IMR-90 (cell line): ENCODE measurements at regions of chr15 and their contacts with region 1.

Region 1: GRCh38 chr15:79380755-79381497 is 51.2 kb upstream of the MINAR1 start:
- DNase-seq: peak; percentile 74
- ATAC-seq: peak; percentile 98
- H3K4me3 ChIP-seq: no peak overlapping the region
- H3K27ac ChIP-seq: no peak overlapping the region
- H3K4me1 ChIP-seq: no peaks in the 10 kb centered on the region
- H3K27me3 ChIP-seq: no peaks in the 10 kb centered on the region
- CTCF ChIP-seq: peak; percentile 90
- POLR2A ChIP-seq: no peak; the same call in 1 of the 2 replicates
- RAD21 ChIP-seq: peak; percentile 92

Region 2: GRCh38 chr15:79015416-79015815 is 365.5 kb before region 1 on chr15:
- CTCF ChIA-PET with region 1: no interaction called
- POLR2A ChIA-PET with region 1: no interaction called
- dilution Hi-C with region 1: no loop called
- in situ Hi-C with region 1: no loop called
- intact Hi-C with region 1: no loop called
- DNase-seq: no peak
- ATAC-seq: no peak
- H3K4me3 ChIP-seq: no peak overlapping the region
- H3K27ac ChIP-seq: no peak overlapping the region
- H3K4me1 ChIP-seq: no peaks in the 10 kb centered on the region
- H3K27me3 ChIP-seq: peaks cover 30% of the 10 kb centered on the region
- CTCF ChIP-seq: no peak
- POLR2A ChIP-seq: no peak
- RAD21 ChIP-seq: no peak

Region 3: GRCh38 chr15:79091204-79091867 is 289.6 kb before region 1 on chr15:
- CTCF ChIA-PET with region 1: no interaction called
- POLR2A ChIA-PET with region 1: no interaction called
- dilution Hi-C with region 1: no loop called
- in situ Hi-C with region 1: no loop called
- intact Hi-C with region 1: no loop called
- DNase-seq: peak; percentile 6
- ATAC-seq: peak; percentile 40
- H3K4me3 ChIP-seq: no peak overlapping the region
- H3K27ac ChIP-seq: no peak overlapping the region
- H3K4me1 ChIP-seq: no peaks in the 10 kb centered on the region
- H3K27me3 ChIP-seq: peaks cover 35% of the 10 kb centered on the region
- CTCF ChIP-seq: no peak
- POLR2A ChIP-seq: no peak
- RAD21 ChIP-seq: no peak

Region 4: DNA sequence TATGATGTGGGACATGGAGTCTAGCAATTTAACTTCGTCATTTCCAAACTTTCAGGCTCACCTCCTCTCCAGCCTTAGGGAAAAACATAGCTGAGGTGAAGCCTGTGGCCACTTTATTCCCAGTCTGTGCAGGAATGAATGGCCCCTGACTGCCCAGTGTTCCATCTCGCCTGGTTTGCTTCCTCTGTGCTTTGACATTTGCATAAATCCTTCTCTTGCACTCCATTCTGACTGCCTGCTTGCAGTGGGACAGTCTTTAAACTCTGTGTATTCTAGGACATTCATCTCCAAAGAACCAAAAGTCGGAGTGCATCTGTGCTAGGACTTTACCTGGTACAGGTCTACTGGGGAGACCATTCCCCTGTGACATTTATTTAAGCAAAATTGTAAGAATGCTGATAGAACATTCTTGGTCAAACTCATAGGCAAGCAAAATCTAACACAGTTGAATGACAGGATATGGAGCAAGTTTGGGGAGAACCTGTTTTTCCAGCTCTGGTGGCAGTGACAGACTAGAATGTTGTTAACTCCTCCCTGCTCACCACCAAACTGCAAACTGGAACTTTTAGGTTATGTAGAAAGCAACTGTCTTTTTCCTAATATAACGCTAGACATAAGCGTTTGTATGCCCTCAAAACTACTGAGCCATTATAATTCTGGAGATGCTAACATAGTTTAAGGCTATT is 48.0 kb before region 1 on chr15:
- CTCF ChIA-PET with region 1: no interaction called
- POLR2A ChIA-PET with region 1: no interaction called
- dilution Hi-C with region 1: no loop called
- in situ Hi-C with region 1: no loop called
- intact Hi-C with region 1: no loop called
- DNase-seq: no peak
- ATAC-seq: no peak
- H3K4me3 ChIP-seq: no peak overlapping the region
- H3K27ac ChIP-seq: no peak overlapping the region
- H3K4me1 ChIP-seq: peaks cover 3% of the 10 kb centered on the region
- H3K27me3 ChIP-seq: no peaks in the 10 kb centered on the region
- CTCF ChIP-seq: no peak
- POLR2A ChIP-seq: no peak
- RAD21 ChIP-seq: no peak

Region 5: DNA sequence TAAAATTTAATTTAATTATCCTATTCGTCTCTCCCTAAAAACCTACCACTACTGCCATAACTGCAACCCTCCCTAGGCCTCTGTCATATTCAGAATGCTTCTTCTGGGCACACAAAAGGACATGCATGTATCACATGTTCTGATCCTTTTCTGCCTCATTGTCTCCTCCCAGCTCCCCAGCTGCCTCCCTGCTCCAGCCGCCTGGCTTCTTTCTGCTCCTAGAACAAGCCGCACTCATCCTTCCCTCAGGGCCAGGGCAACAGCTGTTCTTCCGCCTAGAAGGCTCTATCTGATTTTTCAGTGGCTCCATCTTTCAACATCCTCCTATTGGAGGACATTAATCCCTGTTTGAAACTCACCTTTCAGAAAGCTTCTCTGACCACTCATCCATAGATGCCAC is 31.4 kb before region 1 on chr15:
- CTCF ChIA-PET with region 1: no interaction called
- POLR2A ChIA-PET with region 1: no interaction called
- dilution Hi-C with region 1: no loop called
- in situ Hi-C with region 1: no loop called
- intact Hi-C with region 1: no loop called
- DNase-seq: no peak
- ATAC-seq: no peak
- H3K4me3 ChIP-seq: no peak overlapping the region
- H3K27ac ChIP-seq: no peak overlapping the region
- H3K4me1 ChIP-seq: no peaks in the 10 kb centered on the region
- H3K27me3 ChIP-seq: no peaks in the 10 kb centered on the region
- CTCF ChIP-seq: no peak
- POLR2A ChIP-seq: no peak
- RAD21 ChIP-seq: no peak

Region 6: DNA sequence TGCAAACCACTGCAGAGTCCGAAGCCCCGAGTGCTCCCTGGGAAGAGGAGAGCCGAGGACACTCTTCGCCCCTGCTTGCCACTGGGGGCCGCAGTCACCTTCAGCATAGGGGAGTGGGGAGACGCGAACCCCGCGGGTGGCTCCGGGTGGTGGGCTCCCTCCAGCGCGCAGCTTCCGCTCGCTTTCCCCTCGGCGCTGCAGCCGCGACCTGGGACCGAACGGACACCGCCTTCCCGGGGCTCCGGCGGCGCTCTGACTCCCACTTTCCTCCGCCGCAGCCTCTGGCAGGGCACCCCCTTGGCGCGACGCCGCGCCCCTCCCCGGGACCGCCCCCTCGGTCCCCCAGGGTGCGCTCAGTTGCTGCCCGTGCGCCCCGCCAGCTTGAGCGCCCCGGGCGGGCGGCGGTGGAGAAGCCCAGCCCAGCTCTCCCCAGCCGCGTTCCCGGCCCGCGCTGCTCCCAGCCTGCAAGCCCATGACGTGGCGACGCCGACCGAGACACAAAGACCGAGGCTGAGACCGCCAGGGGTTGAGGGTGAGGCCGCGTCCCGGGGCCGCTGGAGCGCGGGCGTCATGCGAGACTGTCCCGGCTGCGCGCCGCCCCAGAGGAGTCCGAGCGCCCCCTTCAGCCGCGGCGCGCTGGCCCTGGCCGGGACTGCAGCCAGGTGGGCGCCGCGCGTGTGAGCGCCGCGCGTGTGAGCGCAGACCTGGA is 50.9 kb after region 1 on chr15 and contains the start of gene MINAR1:
- CTCF ChIA-PET with region 1: interaction called, 7 read pairs
- POLR2A ChIA-PET with region 1: no interaction called
- dilution Hi-C with region 1: no loop called
- in situ Hi-C with region 1: no loop called
- intact Hi-C with region 1: loop called (anchors 2 kb)
- DNase-seq: peak; percentile 56
- ATAC-seq: peak; percentile 86
- H3K4me3 ChIP-seq: peak within 1 kb of the TSS; percentile 65
- H3K27ac ChIP-seq: no peak within 1 kb of the TSS
- H3K4me1 ChIP-seq: no peaks in the 10 kb centered on the region
- H3K27me3 ChIP-seq: peaks cover 42% of the 10 kb centered on the region
- CTCF ChIP-seq: peak; percentile 45
- POLR2A ChIP-seq: no peak
- RAD21 ChIP-seq: peak; percentile 47
- total RNA-seq, gene MINAR1: 1.4 and 1.6 TPM in 2 replicates

Region 7: GRCh38 chr15:79853458-79854328 is 472.8 kb after region 1 on chr15:
- CTCF ChIA-PET with region 1: interaction called, 68 read pairs
- POLR2A ChIA-PET with region 1: no interaction called
- dilution Hi-C with region 1: no loop called
- in situ Hi-C with region 1: loop called (anchors 5 kb)
- intact Hi-C with region 1: loop called (anchors 1 kb)
- DNase-seq: peak; percentile 93
- ATAC-seq: peak; percentile 100
- H3K4me3 ChIP-seq: no peak overlapping the region
- H3K27ac ChIP-seq: no peak overlapping the region
- H3K4me1 ChIP-seq: no peaks in the 10 kb centered on the region
- H3K27me3 ChIP-seq: no peaks in the 10 kb centered on the region
- CTCF ChIP-seq: peak; percentile 95
- POLR2A ChIP-seq: no peak
- RAD21 ChIP-seq: peak; percentile 90